ENCODE measurements at regions of chr1 and their contacts with region 1.

Region 1: DNA sequence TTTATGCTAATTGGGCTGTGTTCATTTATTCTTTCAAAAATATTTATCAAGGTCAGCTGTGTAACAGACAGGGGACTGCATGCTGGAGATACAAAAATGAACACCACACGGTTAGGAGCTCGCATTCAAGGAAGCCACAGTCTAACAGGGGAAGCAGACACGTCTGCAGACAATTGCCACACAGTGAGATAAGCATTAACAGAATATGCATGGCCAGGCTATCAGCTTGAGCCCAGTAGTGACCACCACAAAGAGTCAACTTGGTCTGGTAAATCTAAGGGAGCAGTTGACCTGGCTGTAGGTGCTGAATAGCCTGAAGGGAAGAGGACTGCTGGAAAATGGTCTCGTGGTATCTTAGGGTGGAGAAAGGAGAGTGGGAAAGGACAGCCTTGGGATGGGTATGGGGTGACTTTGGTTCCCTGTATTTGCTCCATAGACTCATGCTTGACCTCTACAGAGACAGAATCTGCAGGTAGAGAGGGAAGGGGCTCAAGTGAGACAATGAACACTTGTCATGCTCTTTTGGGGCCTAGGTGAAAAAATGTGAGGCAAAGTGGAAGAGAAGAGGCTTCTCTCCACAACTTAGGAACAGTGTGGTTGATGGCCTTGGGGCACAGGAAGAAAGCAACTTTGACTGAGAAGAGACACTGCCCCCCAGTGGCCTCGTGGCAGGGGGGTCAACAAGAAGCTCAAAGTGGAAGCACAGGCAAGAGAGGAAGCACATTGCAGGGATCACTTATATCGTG is 7.6 kb upstream of the NPL start:
- H3K4me3 Mint-ChIP-seq: no peak overlapping the region
- H3K27ac Mint-ChIP-seq: no peak overlapping the region
- H3K4me1 Mint-ChIP-seq: peaks cover 17% of the 10 kb centered on the region
- H3K27me3 Mint-ChIP-seq: no peaks in the 10 kb centered on the region

Region 2: DNA sequence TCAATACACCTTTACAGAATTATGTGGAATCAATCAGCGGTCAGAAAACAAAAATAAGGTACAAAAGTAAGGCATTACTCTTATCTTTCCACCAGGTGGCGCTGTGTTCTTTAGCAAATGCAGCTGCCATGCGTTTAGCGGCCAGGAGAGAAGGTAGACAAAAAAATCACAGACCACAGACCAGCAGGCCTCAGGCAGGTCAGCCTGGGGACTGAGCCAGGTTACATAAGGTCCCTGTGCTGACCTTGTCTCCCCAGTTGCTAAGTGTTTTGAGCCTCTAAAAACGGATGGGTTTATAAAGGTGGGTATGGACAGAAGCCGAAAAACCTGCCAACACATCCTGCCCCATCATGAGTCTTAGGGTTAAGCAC is 180.6 kb before region 1 on chr1:
- intact Hi-C with region 1: loop called (anchors 1 kb)
- H3K4me3 Mint-ChIP-seq: no peak overlapping the region
- H3K27ac Mint-ChIP-seq: no peak overlapping the region
- H3K4me1 Mint-ChIP-seq: peaks cover 32% of the 10 kb centered on the region
- H3K27me3 Mint-ChIP-seq: peaks cover 19% of the 10 kb centered on the region

Measured in dendritic cell treated with granulocyte-macrophage colony-stimulating factor and Interleukin-4, amounts not matched to agents 40 ng/mL and 50 ng/mL, for 4 days (primary cell).